Right cardiac atrium (tissue), 5 donors: ENCODE measurements at regions of chr2 and their contacts with region 1.

Region 1: DNA sequence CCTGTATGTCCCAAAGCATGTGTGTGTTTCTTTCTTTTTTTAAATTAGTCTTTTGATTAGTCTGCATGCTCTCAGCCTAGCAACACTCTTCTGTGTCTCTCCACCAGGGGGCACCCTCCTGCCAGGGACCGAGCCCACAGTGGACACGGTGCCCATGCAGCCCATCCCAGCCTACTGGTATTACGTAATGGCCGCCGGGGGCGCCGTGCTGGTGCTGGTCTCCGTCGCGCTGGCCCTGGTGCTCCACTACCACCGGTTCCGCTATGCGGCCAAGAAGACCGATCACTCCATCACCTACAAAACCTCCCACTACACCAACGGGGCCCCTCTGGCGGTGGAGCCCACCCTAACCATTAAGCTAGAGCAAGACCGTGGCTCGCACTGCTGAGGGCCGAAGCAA is 93.8 kb downstream of the NRP2 start:
- DNase-seq: peak; percentile 55 to 82 (median 79)
- ATAC-seq: peak; percentile 74 to 79
- H3K4me3 ChIP-seq: no peak overlapping the region
- H3K27ac ChIP-seq: no peak overlapping the region
- H3K4me1 ChIP-seq: no peaks in the 10 kb centered on the region
- H3K27me3 ChIP-seq: no peaks in the 10 kb centered on the region

Region 2: GRCh38 chr2:205358351-205358815 is 417.8 kb before region 1 on chr2:
- intact Hi-C with region 1: no loop called
- DNase-seq: no peak
- ATAC-seq: no peak
- H3K4me3 ChIP-seq: no peak overlapping the region
- H3K27ac ChIP-seq: no peak overlapping the region
- H3K4me1 ChIP-seq: no peaks in the 10 kb centered on the region
- H3K27me3 ChIP-seq: no peaks in the 10 kb centered on the region

Region 3: DNA sequence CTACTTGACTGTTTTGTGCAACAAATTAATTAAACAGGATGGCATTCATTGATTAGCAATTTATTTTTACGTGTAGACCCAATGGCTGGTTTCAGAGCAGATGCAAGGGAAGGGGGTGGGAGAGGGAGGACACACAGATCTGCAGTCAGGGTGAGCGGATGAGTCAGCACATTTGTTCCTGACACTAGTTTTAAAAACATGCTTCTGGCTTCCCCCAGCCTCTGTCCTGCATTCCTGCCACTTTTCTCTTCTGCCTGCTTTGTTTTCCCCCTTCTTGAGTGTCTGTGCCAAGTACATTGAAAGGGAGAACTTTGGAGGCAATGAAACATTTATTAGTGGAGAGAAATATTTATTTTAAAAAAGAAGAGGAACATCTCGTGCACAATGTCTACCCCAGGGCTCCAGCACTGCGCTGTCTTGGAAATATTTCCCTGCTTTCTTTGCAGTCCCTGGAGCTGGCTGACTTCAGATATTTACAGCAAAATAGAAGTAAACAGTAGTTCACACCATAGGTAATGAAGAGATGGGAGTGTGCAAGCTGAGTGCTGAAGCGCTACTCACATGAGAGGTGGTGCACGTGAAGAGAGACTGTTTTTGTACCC is 41.6 kb before region 1 on chr2:
- intact Hi-C with region 1: no loop called
- DNase-seq: peak in 1 of 3 donors; percentile 70
- ATAC-seq: peak; percentile 38 to 57
- H3K4me3 ChIP-seq: no peak overlapping the region
- H3K27ac ChIP-seq: peak overlapping the region; percentile 18
- H3K4me1 ChIP-seq: peaks cover 3% of the 10 kb centered on the region
- H3K27me3 ChIP-seq: no peaks in the 10 kb centered on the region

Region 4: DNA sequence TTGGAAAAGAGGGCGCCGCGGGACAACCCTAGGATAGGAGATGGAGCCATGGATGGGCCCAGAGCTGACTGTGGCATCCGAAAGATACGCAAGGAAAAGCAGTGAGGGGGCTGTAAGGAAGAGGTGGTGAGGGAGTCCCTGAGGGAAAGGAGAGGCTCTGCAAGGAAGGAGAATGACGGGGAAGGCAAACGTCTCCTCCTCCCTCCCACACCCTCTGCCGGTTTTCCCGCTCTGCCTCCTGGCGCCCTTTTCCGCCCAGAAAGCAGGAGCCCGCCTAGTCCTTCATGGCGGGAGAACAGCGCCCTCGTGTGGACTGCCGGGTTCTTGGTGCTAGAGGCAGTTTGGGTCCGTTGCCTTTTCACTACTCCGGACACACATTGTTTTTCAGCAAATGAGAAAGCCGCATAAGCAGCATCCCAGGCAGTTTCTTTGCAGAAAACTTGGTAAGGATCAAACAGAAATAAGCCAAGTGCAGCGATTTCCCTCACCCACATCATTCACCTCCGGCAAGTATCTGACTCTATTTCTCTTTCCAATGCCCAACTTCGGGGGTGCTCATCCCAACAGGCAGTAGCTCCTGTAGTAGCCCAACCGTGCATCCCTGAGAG is 109.5 kb after region 1 on chr2:
- intact Hi-C with region 1: loop called in 2 of 4 experiments (anchors 5 to 10 kb)
- DNase-seq: peak; percentile 89 to 95 (median 94)
- ATAC-seq: peak; percentile 88 to 89
- H3K4me3 ChIP-seq: no peak overlapping the region
- H3K27ac ChIP-seq: no peak overlapping the region
- H3K4me1 ChIP-seq: peaks cover 2% of the 10 kb centered on the region
- H3K27me3 ChIP-seq: no peaks in the 10 kb centered on the region

Region 5: GRCh38 chr2:205925373-205926337 is 149.5 kb after region 1 on chr2:
- intact Hi-C with region 1: loop called in 3 of 4 experiments (anchors 5 to 10 kb)
- DNase-seq: peak; percentile 80 to 92 (median 91)
- ATAC-seq: peak; percentile 89 to 92
- H3K4me3 ChIP-seq: peak overlapping the region; percentile 15
- H3K27ac ChIP-seq: no peak overlapping the region
- H3K4me1 ChIP-seq: no peaks in the 10 kb centered on the region
- H3K27me3 ChIP-seq: no peaks in the 10 kb centered on the region

Region 6: GRCh38 chr2:206392118-206392517 is 616.0 kb after region 1 on chr2:
- intact Hi-C with region 1: no loop called
- DNase-seq: no peak
- ATAC-seq: no peak
- H3K4me3 ChIP-seq: no peak overlapping the region
- H3K27ac ChIP-seq: no peak overlapping the region
- H3K4me1 ChIP-seq: peaks cover 1% of the 10 kb centered on the region
- H3K27me3 ChIP-seq: no peaks in the 10 kb centered on the region